ENCODE measurements at regions of chr20 and their contacts with region 1.

Region 1: GRCh38 chr20:40654876-40655275 is 34.2 kb downstream of the MAFB start:
- DNase-seq: no peak
- H3K4me3 Mint-ChIP-seq: no peak overlapping the region
- H3K27ac Mint-ChIP-seq: no peak overlapping the region
- H3K4me1 Mint-ChIP-seq: no peaks in the 10 kb centered on the region
- H3K27me3 Mint-ChIP-seq: no peaks in the 10 kb centered on the region

Region 2: DNA sequence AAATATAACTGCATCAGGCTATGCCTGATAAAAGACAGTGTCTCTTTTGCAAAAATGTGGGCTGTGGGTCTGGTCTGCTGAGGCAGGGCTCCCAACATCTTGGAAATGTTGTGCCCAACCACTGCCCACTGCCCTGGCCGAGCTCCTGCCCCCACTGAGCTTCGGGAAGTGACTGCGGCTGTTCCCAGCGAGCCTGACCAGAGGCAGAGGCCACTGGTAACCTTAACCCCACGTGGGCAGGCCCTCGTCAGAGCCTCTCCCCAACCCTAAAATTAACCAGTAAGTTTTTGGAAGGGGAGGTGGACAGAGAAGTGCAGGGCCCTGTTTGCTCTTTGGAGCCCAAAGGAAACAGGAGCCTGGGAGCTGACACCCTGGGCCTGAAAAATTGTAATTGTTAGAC is 191.7 kb before region 1 on chr20:
- CTCF ChIA-PET with region 1: no interaction called
- intact Hi-C with region 1: no loop called
- DNase-seq: no peak
- H3K4me3 Mint-ChIP-seq: no peak overlapping the region
- H3K27ac Mint-ChIP-seq: no peak overlapping the region
- H3K4me1 Mint-ChIP-seq: no peaks in the 10 kb centered on the region
- H3K27me3 Mint-ChIP-seq: peaks cover 2% of the 10 kb centered on the region

Region 3: DNA sequence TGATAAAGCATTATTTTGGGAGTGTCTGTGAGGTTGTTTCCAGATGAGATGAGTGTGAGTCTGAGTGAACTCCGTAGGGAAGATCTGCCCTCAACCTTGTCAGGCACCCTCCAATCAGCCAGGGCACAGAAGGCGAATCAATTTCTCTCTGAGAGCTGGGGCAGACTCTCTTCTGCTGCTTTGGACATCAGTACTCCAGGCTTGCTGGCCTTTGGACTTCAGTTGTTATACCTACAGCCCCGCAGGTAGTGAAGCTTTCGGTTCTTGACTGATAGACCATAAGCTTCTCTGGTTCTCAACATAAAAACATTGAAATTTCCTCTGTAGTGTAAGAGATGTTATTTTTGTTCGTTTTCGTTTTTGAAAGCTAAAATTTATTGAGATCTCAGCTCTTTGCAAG is 37.3 kb before region 1 on chr20:
- CTCF ChIA-PET with region 1: no interaction called
- intact Hi-C with region 1: no loop called
- DNase-seq: no peak
- H3K4me3 Mint-ChIP-seq: no peak overlapping the region
- H3K27ac Mint-ChIP-seq: no peak overlapping the region
- H3K4me1 Mint-ChIP-seq: no peaks in the 10 kb centered on the region
- H3K27me3 Mint-ChIP-seq: peaks cover 16% of the 10 kb centered on the region

Region 4: GRCh38 chr20:40643891-40644290 is 11.0 kb before region 1 on chr20:
- CTCF ChIA-PET with region 1: no interaction called
- intact Hi-C with region 1: loop called (anchors 1 kb)
- DNase-seq: no peak
- H3K4me3 Mint-ChIP-seq: no peak overlapping the region
- H3K27ac Mint-ChIP-seq: no peak overlapping the region
- H3K4me1 Mint-ChIP-seq: no peaks in the 10 kb centered on the region
- H3K27me3 Mint-ChIP-seq: peaks cover 11% of the 10 kb centered on the region

Measured in activated naive CD4-positive, alpha-beta T cell treated with anti-CD3 and anti-CD28 coated beads for 36 hours (primary cell).